ENCODE measurements at regions of chr4 and their contacts with region 1.

Region 1: DNA sequence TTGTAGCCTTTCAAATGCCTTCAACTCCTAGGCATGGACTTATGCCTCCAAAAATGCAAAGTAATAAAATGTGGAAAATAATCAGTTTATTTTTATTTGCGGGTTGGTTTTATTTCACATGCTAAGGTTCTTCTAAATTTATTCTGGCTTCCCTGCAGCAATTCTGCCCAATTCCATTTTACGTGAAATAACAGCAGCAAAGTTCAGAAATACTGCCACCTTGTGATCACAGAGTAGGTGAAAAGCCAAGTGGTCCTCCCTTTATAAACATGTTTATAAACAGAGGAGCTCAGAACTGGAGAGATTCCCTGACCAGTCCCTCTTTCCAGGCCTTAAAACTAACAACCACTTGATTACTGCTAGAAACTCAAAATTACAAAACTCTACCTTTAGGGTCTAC is 14.7 kb upstream of the DCHS2 start:
- DNase-seq: peak; percentile 13
- ATAC-seq: peak; percentile 79
- H3K4me3 ChIP-seq: no peak overlapping the region
- H3K27ac ChIP-seq: no peak overlapping the region
- H3K4me1 ChIP-seq: peaks cover 0 to 2% of the 10 kb centered on the region in 2 experiments; a peak in 1 of 4 replicates
- H3K27me3 ChIP-seq: peaks cover 14% of the 10 kb centered on the region
- CTCF ChIP-seq: peak; percentile 45 to 52 (median 49); a peak in 4 of 6 replicates
- POLR2A ChIP-seq: no peak
- RAD21 ChIP-seq: peak; percentile 62

Region 2: GRCh38 chr4:153773236-153773690 is 733.0 kb before region 1 on chr4:
- CTCF ChIA-PET with region 1: no interaction called
- POLR2A ChIA-PET with region 1: no interaction called
- RAD21 ChIA-PET with region 1: no interaction called
- intact Hi-C with region 1: loop called (anchors 5 kb)
- DNase-seq: no peak
- ATAC-seq: no peak
- H3K4me3 ChIP-seq: no peak overlapping the region
- H3K27ac ChIP-seq: no peak overlapping the region
- H3K4me1 ChIP-seq: no peaks in the 10 kb centered on the region
- H3K27me3 ChIP-seq: no peaks in the 10 kb centered on the region
- CTCF ChIP-seq: peak in 2 of 3 experiments; percentile 13 to 34; a peak in 1 of 6 replicates
- POLR2A ChIP-seq: no peak
- RAD21 ChIP-seq: peak; percentile 51

Region 3: GRCh38 chr4:154073107-154073822 is 433.0 kb before region 1 on chr4:
- CTCF ChIA-PET with region 1: no interaction called
- POLR2A ChIA-PET with region 1: no interaction called
- RAD21 ChIA-PET with region 1: no interaction called
- intact Hi-C with region 1: loop called (anchors 10 kb)
- DNase-seq: no peak
- ATAC-seq: no peak
- H3K4me3 ChIP-seq: no peak overlapping the region
- H3K27ac ChIP-seq: no peak overlapping the region
- H3K4me1 ChIP-seq: peaks cover 0 to 6% of the 10 kb centered on the region in 2 experiments; a peak in 1 of 4 replicates
- H3K27me3 ChIP-seq: no peaks in the 10 kb centered on the region
- CTCF ChIP-seq: no peak
- POLR2A ChIP-seq: no peak
- RAD21 ChIP-seq: no peak

Region 4: DNA sequence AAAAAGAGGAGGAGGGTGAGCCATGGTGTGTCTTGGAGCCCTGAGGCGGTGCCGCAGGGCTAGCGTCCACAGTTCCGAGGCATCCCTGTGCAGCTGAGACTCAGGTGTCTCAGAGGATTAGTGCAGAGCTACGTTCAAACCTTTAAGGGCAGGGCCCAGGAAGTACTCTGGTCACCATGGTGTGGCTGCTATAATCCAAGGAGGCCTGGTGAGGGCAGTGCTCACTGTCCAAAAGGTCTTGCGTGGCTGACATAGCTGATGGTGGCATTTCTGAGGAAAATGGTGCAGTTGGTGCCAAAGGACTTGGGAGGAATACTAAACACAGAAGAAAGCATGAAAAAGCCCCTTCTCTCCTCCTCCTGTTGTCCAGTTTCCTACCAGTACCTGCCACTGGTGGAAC is 161.6 kb before region 1 on chr4:
- CTCF ChIA-PET with region 1: interaction called, 17 read pairs
- POLR2A ChIA-PET with region 1: no interaction called
- RAD21 ChIA-PET with region 1: interaction called in 1 of 2 experiments, 3 read pairs
- intact Hi-C with region 1: no loop called
- DNase-seq: peak; percentile 19
- ATAC-seq: peak; percentile 91
- H3K4me3 ChIP-seq: no peak overlapping the region
- H3K27ac ChIP-seq: no peak overlapping the region
- H3K4me1 ChIP-seq: no peaks in the 10 kb centered on the region
- H3K27me3 ChIP-seq: no peaks in the 10 kb centered on the region
- CTCF ChIP-seq: peak; percentile 24 to 43 (median 36); a peak in 4 of 6 replicates
- POLR2A ChIP-seq: no peak
- RAD21 ChIP-seq: peak; percentile 45; the same call in 1 of the 2 replicates

Region 5: GRCh38 chr4:154516318-154517029 is 10.2 kb after region 1 on chr4:
- CTCF ChIA-PET with region 1: interaction called, 12 read pairs
- POLR2A ChIA-PET with region 1: no interaction called
- RAD21 ChIA-PET with region 1: no interaction called
- intact Hi-C with region 1: no loop called
- DNase-seq: no peak
- ATAC-seq: no peak
- H3K4me3 ChIP-seq: no peak overlapping the region
- H3K27ac ChIP-seq: no peak overlapping the region
- H3K4me1 ChIP-seq: no peaks in the 10 kb centered on the region
- H3K27me3 ChIP-seq: peaks cover 3% of the 10 kb centered on the region; the same call in 1 of the 2 replicates
- CTCF ChIP-seq: no peak
- POLR2A ChIP-seq: no peak
- RAD21 ChIP-seq: no peak

Measured in HCT116 (cell line).